Left ventricle myocardium inferior (tissue), 1 donor: ENCODE measurements at regions of chr1 and their contacts with region 1.

Region 1: GRCh38 chr1:39196244-39197215 is 8.0 kb upstream of the MACF1 start:
- DNase-seq: no peak
- H3K4me3 ChIP-seq: no peak overlapping the region
- H3K27ac ChIP-seq: peak overlapping the region; percentile 23
- H3K4me1 ChIP-seq: peaks cover 55% of the 10 kb centered on the region
- H3K27me3 ChIP-seq: no peaks in the 10 kb centered on the region
- CTCF ChIP-seq: no peak

Region 2: GRCh38 chr1:39102537-39103327 is 93.8 kb before region 1 on chr1:
- intact Hi-C with region 1: loop called (anchors 2 kb)
- DNase-seq: no peak
- H3K4me3 ChIP-seq: no peak overlapping the region
- H3K27ac ChIP-seq: peak overlapping the region; percentile 39
- H3K4me1 ChIP-seq: peaks cover 56% of the 10 kb centered on the region
- H3K27me3 ChIP-seq: no peaks in the 10 kb centered on the region
- CTCF ChIP-seq: peak; percentile 80